Posterior vena cava (tissue), 2 donors: ENCODE measurements at regions of chr14 and their contacts with region 1.

Region 1: GRCh38 chr14:106622200-106622745 is 1095.9 kb downstream of the TMEM121 start:
- DNase-seq: no peak

Region 2: GRCh38 chr14:106586098-106586704 is 36.1 kb before region 1 on chr14:
- intact Hi-C with region 1: no loop called
- DNase-seq: no peak

Region 3: DNA sequence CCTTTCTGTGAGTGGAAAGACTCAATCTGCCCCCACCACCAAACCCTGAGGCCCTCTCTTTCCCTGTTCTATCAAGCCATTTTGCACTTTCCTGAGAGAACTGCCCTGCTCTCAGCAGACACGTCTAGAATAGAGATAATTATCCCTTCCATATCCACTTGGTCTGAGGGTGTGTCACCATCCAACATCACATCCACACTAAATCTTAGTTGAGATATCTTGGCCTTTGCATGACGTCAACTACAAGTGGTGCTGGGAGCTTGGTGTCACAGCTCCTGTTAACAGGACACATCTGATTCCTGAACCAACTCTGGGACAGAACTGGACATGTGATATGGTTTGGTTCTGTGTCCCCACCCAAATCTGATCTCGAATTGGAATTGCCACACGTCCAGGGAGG is 13.3 kb after region 1 on chr14:
- intact Hi-C with region 1: loop called in 1 of 2 experiments (anchors 1 kb)
- DNase-seq: no peak

Region 4: GRCh38 chr14:106872611-106873446 is 250.6 kb after region 1 on chr14:
- intact Hi-C with region 1: no loop called
- DNase-seq: peak; percentile 85